Panc1 (cell line): ENCODE measurements at regions of chr19 and their contacts with region 1.

Region 1: GRCh38 chr19:29694669-29695627 is 20.1 kb downstream of the C19orf12 start:
- DNase-seq: no peak
- ATAC-seq: peak; percentile 100
- H3K4me3 ChIP-seq: no peak overlapping the region
- H3K27ac ChIP-seq: no peak overlapping the region
- H3K4me1 ChIP-seq: peaks cover 8% of the 10 kb centered on the region; the same call in 1 of the 2 replicates
- H3K27me3 ChIP-seq: no peaks in the 10 kb centered on the region
- CTCF ChIP-seq: peak; percentile 98

Region 2: GRCh38 chr19:29665215-29665825 is 29.6 kb before region 1 on chr19 and contains the start of gene PLEKHF1:
- CTCF ChIA-PET with region 1: no interaction called
- POLR2A ChIA-PET with region 1: no interaction called
- in situ Hi-C with region 1: no loop called
- intact Hi-C with region 1: no loop called
- DNase-seq: no peak
- ATAC-seq: peak; percentile 90
- H3K4me3 ChIP-seq: peak within 1 kb of the TSS; percentile 71 to 77
- H3K27ac ChIP-seq: peak within 1 kb of the TSS; percentile 83
- H3K4me1 ChIP-seq: peaks cover 60% of the 10 kb centered on the region
- H3K27me3 ChIP-seq: no peaks in the 10 kb centered on the region
- CTCF ChIP-seq: no peak
- total RNA-seq, gene PLEKHF1: 22.4 TPM

Region 3: DNA sequence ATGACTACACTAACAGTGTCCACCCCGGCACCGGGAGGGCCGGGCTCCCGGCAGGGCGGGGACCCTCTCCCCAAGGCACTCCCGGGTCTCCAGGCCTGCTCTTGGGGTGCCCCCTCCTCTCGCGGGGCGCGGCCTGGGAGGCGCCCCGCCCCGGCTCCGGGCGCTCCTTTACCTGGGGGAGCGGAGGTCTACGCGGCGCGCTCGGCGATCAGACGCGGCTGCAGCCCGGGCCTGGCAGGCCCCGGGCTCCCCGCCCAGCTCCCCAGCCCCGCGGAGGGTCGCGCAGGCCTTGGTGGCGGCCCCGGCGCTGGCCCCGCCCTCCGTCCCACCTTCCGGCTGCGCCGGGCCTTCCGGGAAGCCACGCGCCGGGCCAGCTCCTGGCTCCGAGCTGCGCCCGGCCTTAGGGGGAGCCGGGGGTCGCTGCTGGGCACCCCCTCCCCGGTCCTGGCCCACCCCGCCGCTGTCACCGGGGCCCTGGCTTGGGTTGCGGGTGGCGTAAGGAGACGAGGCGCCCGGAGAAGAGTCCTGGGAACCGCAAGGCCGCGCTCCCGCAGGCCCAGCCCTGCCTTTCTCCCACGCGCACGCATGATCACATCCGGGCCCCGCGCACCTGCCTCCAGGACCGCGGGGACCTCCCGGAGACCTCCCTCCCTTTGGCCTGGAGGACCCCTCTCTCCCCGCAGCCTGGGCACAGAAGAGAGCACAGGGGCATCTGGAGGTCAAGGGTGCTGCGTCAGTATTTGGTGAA is 20.2 kb after region 1 on chr19 and contains the start of gene C19orf12:
- CTCF ChIA-PET with region 1: interaction called, 11 read pairs
- POLR2A ChIA-PET with region 1: interaction called, 9 read pairs
- in situ Hi-C with region 1: no loop called
- intact Hi-C with region 1: loop called (anchors 1 kb)
- DNase-seq: no peak
- ATAC-seq: peak; percentile 88
- H3K4me3 ChIP-seq: peak within 1 kb of the TSS; percentile 76 to 78
- H3K27ac ChIP-seq: peak within 1 kb of the TSS; percentile 96
- H3K4me1 ChIP-seq: peaks cover 15% of the 10 kb centered on the region
- H3K27me3 ChIP-seq: no peaks in the 10 kb centered on the region
- CTCF ChIP-seq: no peak
- total RNA-seq, gene C19orf12: 43.4 TPM

Region 4: DNA sequence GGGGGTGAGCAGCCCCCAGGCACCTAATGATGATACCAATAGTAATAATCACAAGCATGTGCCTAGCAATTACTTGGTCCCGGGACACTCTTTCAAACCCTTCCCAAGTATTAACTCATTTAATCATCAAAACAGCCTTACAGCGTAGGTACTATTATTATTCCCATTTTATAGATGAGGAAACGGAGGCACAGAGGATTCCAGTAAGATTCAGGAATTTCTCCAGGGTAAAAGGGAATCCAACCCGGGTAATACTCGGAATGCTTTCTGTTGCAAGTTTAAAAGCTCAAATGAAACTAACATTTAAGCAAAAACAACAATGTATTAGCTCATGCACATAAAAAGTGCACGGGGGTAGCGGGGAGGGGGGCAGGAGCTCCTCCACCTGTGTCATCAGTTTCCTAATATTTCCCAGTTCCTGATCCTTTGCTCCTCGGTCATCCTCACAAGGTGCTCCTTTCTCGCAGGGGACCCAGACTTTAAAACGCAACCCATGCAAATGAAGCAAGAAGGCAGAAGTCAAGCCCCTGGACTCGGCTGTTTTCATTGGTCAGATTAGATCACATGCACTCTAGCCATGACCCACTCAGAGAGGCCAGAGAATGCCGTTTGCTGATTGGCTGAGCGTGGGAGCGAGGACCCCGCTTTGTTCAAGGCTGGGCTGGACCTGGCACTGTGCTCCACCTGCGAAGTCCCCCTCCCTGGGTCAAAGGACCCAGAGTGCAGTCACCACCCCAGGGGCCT is 58.4 kb after region 1 on chr19:
- CTCF ChIA-PET with region 1: no interaction called
- POLR2A ChIA-PET with region 1: no interaction called
- in situ Hi-C with region 1: no loop called
- intact Hi-C with region 1: no loop called
- DNase-seq: no peak
- ATAC-seq: no peak
- H3K4me3 ChIP-seq: no peak overlapping the region
- H3K27ac ChIP-seq: no peak overlapping the region
- H3K4me1 ChIP-seq: no peaks in the 10 kb centered on the region
- H3K27me3 ChIP-seq: peaks cover 4% of the 10 kb centered on the region
- CTCF ChIP-seq: no peak

Region 5: DNA sequence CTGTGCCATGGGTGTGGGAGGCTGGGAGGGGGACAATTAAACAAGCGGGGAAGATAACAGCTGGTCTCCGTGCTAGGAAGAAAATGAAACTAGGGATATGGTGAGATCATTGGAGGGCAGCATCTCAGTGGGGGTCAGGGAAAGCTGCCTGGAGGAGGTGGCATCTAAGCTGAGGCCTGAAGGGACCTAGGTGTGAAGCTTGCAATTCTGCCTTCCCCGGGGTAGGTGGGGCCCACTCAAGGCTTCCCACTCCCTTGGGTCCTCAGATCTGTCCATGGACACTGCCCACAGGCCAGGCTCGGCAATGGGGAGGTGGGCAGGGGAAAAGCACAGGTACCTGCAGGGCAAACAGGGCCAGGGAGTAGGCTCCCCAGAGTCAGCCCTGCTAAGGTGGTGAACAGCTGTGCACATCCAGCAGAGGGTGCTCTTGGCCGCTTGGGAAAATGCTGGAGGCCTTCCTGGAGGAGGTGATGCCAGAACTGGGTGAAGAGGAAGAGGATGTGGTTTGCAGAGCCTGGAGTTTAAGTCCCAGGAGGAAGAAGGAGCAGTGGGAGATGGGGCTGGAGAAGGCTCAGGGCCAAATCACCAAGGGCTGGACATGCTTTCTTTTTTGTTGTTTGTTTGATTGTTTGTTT is 91.1 kb after region 1 on chr19:
- CTCF ChIA-PET with region 1: no interaction called
- POLR2A ChIA-PET with region 1: no interaction called
- in situ Hi-C with region 1: no loop called
- intact Hi-C with region 1: no loop called
- DNase-seq: no peak
- ATAC-seq: peak; percentile 42; the same call in 1 of the 2 replicates
- H3K4me3 ChIP-seq: no peak overlapping the region
- H3K27ac ChIP-seq: no peak overlapping the region
- H3K4me1 ChIP-seq: no peaks in the 10 kb centered on the region
- H3K27me3 ChIP-seq: no peaks in the 10 kb centered on the region
- CTCF ChIP-seq: no peak; the same call in 1 of the 2 replicates

Region 6: GRCh38 chr19:29908963-29909944 is 214.3 kb after region 1 on chr19:
- CTCF ChIA-PET with region 1: no interaction called
- POLR2A ChIA-PET with region 1: no interaction called
- in situ Hi-C with region 1: no loop called
- intact Hi-C with region 1: no loop called
- DNase-seq: no peak
- ATAC-seq: peak; percentile 56; the same call in 1 of the 2 replicates
- H3K4me3 ChIP-seq: no peak overlapping the region
- H3K27ac ChIP-seq: no peak overlapping the region
- H3K4me1 ChIP-seq: 0 out of 2 replicates have a peak, but pooled peaks cover 6% of the 10 kb centered on the region
- H3K27me3 ChIP-seq: no peaks in the 10 kb centered on the region
- CTCF ChIP-seq: no peak